ENCODE measurements at regions of chr14 and their contacts with region 1.

Region 1: DNA sequence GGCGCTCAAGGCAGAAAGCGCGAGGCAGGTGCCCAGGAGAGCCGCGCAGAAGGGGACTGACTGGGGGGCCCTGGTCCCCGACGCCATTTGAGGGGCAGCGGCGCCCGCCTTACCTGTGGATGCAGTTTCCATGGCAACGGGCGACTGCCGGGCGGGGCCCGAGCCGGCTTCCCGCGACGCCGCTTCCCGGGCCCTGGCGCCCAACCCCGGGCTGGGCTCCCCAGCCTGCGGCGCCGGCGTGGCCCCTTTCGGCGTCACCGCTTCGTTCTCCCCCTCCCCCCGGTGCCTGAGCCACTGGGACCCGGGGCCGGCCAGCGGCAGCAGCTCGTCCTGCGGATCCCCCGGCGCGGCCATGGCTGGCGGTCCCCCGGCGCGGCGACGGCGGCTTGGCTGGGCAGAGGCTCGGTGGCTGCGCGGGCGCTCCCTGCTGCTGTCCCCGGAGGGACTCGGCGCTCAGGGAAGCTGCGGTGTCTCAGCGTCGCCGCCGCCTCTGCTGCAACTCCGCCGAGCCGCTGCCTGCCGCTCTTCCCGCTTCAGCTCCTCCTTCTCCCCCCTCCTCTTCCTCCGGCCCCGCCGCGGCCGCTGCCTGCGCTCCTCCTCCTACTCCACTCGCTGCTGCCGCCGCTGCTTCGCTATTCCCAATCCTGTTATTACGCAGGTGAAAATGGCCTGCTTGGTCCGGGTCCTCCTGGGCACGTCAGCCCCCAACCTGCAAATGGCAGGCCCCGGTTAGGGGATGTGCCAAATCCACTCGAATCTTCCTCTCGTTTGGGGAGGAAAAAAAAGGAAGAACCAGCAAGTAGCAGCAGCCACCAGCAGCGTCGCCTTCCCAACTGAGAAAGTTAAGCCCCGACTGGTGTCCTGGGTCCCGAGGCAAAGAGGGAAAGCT is at the start of gene RTN1:
- DNase-seq: peak in 1 of 2 donors; percentile 83
- H3K4me3 ChIP-seq: peak within 1 kb of the TSS; percentile 54 to 93
- H3K27ac ChIP-seq: peak within 1 kb of the TSS; percentile 73 to 81
- H3K4me1 ChIP-seq: peaks cover 0 to 7% of the 10 kb centered on the region in 2 donors
- H3K27me3 ChIP-seq: no peaks in the 10 kb centered on the region
- CTCF ChIP-seq: peak in 1 of 3 experiments; percentile 17
- total RNA-seq, gene RTN1: 52.3 TPM

Region 2: GRCh38 chr14:57982804-57983634 is 1887.5 kb before region 1 on chr14:
- intact Hi-C with region 1: no loop called
- DNase-seq: no peak
- H3K4me3 ChIP-seq: no peak overlapping the region
- H3K27ac ChIP-seq: no peak overlapping the region
- H3K4me1 ChIP-seq: peaks cover 0 to 1% of the 10 kb centered on the region in 2 donors
- H3K27me3 ChIP-seq: no peaks in the 10 kb centered on the region
- CTCF ChIP-seq: no peak

Region 3: DNA sequence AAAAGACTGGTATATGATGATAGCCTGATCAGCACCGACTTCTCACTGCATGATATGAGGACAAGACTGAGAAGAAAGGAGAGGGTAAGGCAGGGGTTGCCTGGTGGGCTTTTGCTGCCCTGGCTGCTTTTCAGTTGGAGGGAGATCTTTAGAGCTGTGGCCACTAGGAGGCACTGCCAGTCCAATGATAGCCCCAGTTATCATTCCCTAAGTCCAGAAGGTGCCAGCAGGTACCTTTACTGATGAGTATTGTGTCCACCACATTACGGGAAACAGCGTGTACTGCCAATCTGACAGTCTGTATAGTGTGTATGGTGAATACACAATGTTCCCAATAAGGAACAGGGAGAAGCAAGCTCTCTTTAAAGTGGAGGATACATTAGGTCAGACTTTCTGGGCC is 238.1 kb before region 1 on chr14:
- intact Hi-C with region 1: loop called (anchors 5 kb)
- DNase-seq: no peak
- H3K4me3 ChIP-seq: no peak overlapping the region
- H3K27ac ChIP-seq: peak overlapping the region in 1 of 2 donors; percentile 50
- H3K4me1 ChIP-seq: peaks cover 0 to 9% of the 10 kb centered on the region in 2 donors
- H3K27me3 ChIP-seq: no peaks in the 10 kb centered on the region
- CTCF ChIP-seq: peak; percentile 12 to 54 (median 22)

Region 4: GRCh38 chr14:59905188-59905587 is 34.7 kb after region 1 on chr14:
- intact Hi-C with region 1: no loop called
- DNase-seq: no peak
- H3K4me3 ChIP-seq: no peak overlapping the region
- H3K27ac ChIP-seq: no peak overlapping the region
- H3K4me1 ChIP-seq: no peaks in the 10 kb centered on the region
- H3K27me3 ChIP-seq: no peaks in the 10 kb centered on the region
- CTCF ChIP-seq: no peak